ENCODE measurements at regions of chr16 and their contacts with region 1.

Region 1: GRCh38 chr16:88700636-88701482 is 5.3 kb downstream of the RNF166 start:
- DNase-seq: peak; percentile 98
- ATAC-seq: peak; percentile 71
- H3K4me3 Mint-ChIP-seq: peak overlapping the region; percentile 99
- H3K27ac Mint-ChIP-seq: peak overlapping the region; percentile 100
- H3K4me1 Mint-ChIP-seq: peaks cover 64% of the 10 kb centered on the region
- H3K27me3 Mint-ChIP-seq: no peaks in the 10 kb centered on the region

Region 2: GRCh38 chr16:88650749-88651275 is 50.0 kb before region 1 on chr16 and contains the start of gene CYBA:
- CTCF ChIA-PET with region 1: no interaction called
- POLR2A ChIA-PET with region 1: interaction called, 26 read pairs
- DNase-seq: peak; percentile 93
- ATAC-seq: peak; percentile 93
- H3K4me3 Mint-ChIP-seq: peak within 1 kb of the TSS; percentile 93
- H3K27ac Mint-ChIP-seq: peak within 1 kb of the TSS; percentile 94
- H3K4me1 Mint-ChIP-seq: peaks cover 26% of the 10 kb centered on the region
- H3K27me3 Mint-ChIP-seq: no peaks in the 10 kb centered on the region
- total RNA-seq, gene CYBA: 568 to 599 TPM

Region 3: DNA sequence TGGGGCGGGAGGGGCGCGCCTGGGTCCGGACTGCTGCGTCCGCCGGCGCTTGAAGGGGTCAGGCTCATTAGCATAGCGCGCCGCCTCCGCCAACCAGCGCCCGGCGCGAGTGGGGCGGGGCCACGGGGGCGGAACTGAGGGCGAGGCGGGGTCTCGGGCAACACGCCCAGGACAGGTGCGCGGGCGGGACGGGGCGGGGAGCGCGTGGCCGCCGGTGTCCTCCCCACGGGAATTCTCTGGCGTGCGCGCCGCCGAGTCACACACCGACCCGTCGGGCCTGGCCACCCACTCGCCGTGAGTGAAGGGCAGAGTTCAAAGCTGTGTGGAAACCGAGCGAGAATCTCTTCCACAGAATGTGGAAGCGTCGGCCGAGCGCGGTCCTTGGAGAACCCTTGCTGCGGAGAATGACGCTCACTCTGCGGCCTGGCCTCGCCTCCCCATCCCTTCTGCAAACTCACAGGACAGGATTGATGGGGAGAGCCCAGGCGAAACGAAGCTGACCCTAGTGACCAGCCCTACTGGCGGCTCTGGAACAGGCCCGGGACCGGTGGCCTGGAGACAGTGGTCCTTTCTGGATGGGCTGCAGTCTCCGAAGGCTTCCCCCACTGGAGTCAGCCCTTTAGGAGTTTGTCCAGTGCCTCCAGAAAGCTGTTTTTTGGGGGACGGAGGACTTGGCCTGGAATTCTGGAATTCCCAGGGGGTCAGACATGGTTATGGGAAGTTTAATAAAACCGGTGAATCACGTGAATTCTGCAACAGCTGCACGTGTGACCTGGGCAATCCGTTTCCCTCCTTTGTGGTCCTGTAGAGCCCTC is 14.2 kb before region 1 on chr16 and contains the start of gene SNAI3:
- CTCF ChIA-PET with region 1: interaction called, 28 read pairs
- POLR2A ChIA-PET with region 1: interaction called, 38 read pairs
- DNase-seq: peak; percentile 91
- ATAC-seq: peak; percentile 88
- H3K4me3 Mint-ChIP-seq: peak within 1 kb of the TSS; percentile 79
- H3K27ac Mint-ChIP-seq: peak within 1 kb of the TSS; percentile 68
- H3K4me1 Mint-ChIP-seq: peaks cover 69% of the 10 kb centered on the region
- H3K27me3 Mint-ChIP-seq: no peaks in the 10 kb centered on the region
- total RNA-seq, gene SNAI3: 13.4 to 14.3 TPM

Measured in activated CD8-positive, alpha-beta T cell treated with anti-CD3 and anti-CD28 coated beads, Interleukin-2, amount 10 ng/mL, durations not matched to agents 7 days and 5 days (primary cell).